CD14-positive monocyte (primary cell): ENCODE measurements at regions of chr4 and their contacts with region 1.

Region 1: DNA sequence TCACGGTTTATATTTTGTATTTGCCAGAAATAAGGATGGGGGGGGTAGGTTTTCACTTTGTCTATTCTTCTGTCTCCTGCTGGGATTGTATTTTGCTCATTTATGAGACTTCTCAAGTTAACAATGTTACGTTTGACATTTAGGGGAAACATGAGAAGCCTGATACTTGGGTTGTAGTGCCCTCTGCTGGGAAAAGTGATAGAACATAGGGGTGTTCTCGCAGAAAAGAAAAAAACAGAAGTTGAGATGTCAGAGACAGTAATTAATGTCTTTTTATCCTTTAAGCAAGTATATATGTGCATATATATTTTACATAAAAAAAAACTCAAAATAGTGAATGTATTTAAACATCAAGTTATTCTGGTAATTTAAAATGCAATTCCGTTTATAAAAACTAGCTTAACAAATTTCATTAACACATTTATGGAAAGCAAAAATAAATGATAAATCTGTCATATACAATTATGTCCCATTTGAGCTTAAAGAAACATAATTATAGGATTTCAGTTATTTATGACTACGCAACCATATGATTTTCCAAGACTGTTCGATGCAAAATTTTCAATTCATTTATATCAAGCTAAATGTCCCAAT is 46.0 kb upstream of the TMPRSS11F start:
- DNase-seq: peak; percentile 15 to 40 (median 32)
- H3K4me3 ChIP-seq: no peak overlapping the region
- H3K4me3 Mint-ChIP-seq: no peak overlapping the region
- H3K27ac ChIP-seq: no peak overlapping the region
- H3K27ac Mint-ChIP-seq: no peak overlapping the region
- H3K4me1 ChIP-seq: no peaks in the 10 kb centered on the region
- H3K4me1 Mint-ChIP-seq: no peaks in the 10 kb centered on the region
- H3K27me3 ChIP-seq: no peaks in the 10 kb centered on the region
- H3K27me3 Mint-ChIP-seq: peaks cover 0 to 2% (median 1%) of the 10 kb centered on the region in 3 donors
- CTCF ChIP-seq: peak; percentile 64

Region 2: DNA sequence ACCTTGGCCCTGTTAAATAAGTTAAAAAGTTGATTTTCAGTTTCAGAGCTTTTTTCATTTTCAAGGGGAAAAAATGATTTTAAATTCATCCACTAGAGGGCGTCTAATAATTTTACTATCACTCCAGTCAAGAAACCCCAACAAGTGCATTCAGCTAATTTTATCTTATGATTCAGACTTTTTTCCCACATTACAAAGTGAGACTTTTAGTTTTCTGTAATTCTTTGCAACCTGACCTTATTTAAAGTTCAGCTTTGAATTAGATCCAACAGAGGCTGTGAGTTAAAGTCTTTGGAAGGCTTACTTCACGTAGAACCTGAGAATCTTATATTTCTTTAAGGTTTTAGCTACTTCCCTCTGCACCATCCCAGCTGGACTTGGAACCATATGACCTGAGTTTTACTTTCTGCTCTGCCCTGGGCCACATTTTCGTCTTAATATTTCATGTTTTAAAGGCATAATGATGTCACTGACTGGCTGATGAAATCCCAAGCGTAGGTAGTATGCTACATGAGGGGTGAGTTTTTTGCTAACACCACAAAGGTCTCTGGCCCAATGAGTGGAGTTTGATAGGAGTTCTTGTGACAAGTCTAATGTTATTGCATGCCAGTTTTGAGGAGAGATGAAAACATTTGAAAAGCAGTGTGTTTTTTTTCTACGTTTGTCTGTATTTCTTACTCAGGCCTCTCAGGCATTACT is 428.7 kb before region 1 on chr4:
- intact Hi-C with region 1: loop called in 1 of 2 experiments (anchors 10 kb)
- DNase-seq: peak in 2 of 3 donors; percentile 18 to 41
- H3K4me3 ChIP-seq: no peak overlapping the region
- H3K4me3 Mint-ChIP-seq: no peak overlapping the region
- H3K27ac ChIP-seq: no peak overlapping the region
- H3K27ac Mint-ChIP-seq: no peak overlapping the region
- H3K4me1 ChIP-seq: no peaks in the 10 kb centered on the region
- H3K4me1 Mint-ChIP-seq: no peaks in the 10 kb centered on the region
- H3K27me3 ChIP-seq: no peaks in the 10 kb centered on the region
- H3K27me3 Mint-ChIP-seq: no peaks in the 10 kb centered on the region
- CTCF ChIP-seq: peak; percentile 73